ENCODE measurements at regions of chr16 and their contacts with region 1.

Region 1: GRCh38 chr16:56964243-56965148 is 2.7 kb downstream of the CETP start:
- DNase-seq: peak; percentile 98
- H3K4me3 ChIP-seq: no peak overlapping the region
- H3K27ac ChIP-seq: no peak overlapping the region
- H3K4me1 ChIP-seq: no peaks in the 10 kb centered on the region
- H3K27me3 ChIP-seq: no peaks in the 10 kb centered on the region
- CTCF ChIP-seq: peak; percentile 95

Region 2: DNA sequence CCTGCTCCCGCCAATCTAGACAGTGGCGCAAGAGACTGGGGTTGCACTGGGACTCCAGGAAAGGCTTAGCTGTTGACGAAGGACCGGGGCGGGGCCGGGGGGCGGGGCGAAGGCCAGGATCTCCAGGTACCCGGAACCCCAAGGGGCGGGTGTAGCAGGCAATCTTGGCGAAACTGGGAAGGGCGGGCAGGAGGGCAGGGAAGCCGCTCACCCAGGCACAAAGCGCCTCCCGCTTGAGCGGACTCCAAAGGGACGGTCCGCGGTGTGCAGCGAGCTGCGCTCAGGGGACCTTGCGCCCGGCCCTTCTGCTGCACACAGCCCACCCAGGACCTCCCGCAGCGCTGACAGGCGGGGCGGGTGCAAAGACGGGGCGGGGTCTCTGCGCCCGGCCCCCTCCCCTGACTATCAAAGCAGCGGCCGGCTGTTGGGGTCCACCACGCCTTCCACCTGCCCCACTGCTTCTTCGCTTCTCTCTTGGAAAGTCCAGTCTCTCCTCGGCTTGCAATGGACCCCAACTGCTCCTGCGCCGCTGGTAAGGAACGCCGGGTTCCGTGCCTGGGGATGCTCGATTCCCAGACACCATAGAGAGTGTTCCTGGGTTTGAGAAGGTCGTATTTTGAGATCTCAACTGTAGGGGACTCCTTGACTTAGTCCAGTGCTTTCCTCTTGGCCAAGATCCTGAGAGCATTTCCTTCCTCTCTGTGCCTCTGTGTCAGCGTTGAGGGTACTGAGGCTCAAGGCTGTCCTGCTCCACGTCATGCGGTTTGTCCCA is 306.8 kb before region 1 on chr16 and contains the start of gene MT1F:
- intact Hi-C with region 1: no loop called
- DNase-seq: peak; percentile 99
- H3K4me3 ChIP-seq: peak within 1 kb of the TSS; percentile 55
- H3K27ac ChIP-seq: peak within 1 kb of the TSS; percentile 60
- H3K4me1 ChIP-seq: no peaks in the 10 kb centered on the region
- H3K27me3 ChIP-seq: peaks cover under 1% of the 10 kb centered on the region
- CTCF ChIP-seq: no peak
- total RNA-seq, gene MT1F: 35.5 to 40.0 TPM

Region 3: DNA sequence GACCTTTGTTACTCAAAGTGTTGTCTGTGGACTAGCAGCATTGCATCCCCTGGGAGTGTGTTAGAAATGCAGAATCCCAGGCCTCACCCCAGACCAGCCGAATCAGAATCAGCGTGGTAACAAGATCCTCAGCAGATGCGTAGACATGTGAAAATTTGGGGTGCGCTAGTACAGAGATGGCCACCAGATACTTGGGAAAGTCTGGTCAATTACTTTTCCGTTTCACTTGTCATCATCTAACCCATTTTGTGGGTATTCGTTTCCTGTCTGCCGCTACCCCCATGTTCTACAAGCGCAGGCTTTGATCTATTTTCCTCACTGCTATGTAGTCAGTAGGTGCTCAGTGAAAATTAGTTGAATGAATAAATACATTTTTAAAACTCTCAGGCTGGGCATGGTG is 65.6 kb before region 1 on chr16:
- intact Hi-C with region 1: no loop called
- DNase-seq: no peak
- H3K4me3 ChIP-seq: no peak overlapping the region
- H3K27ac ChIP-seq: no peak overlapping the region
- H3K4me1 ChIP-seq: no peaks in the 10 kb centered on the region
- H3K27me3 ChIP-seq: no peaks in the 10 kb centered on the region
- CTCF ChIP-seq: no peak

Region 4: DNA sequence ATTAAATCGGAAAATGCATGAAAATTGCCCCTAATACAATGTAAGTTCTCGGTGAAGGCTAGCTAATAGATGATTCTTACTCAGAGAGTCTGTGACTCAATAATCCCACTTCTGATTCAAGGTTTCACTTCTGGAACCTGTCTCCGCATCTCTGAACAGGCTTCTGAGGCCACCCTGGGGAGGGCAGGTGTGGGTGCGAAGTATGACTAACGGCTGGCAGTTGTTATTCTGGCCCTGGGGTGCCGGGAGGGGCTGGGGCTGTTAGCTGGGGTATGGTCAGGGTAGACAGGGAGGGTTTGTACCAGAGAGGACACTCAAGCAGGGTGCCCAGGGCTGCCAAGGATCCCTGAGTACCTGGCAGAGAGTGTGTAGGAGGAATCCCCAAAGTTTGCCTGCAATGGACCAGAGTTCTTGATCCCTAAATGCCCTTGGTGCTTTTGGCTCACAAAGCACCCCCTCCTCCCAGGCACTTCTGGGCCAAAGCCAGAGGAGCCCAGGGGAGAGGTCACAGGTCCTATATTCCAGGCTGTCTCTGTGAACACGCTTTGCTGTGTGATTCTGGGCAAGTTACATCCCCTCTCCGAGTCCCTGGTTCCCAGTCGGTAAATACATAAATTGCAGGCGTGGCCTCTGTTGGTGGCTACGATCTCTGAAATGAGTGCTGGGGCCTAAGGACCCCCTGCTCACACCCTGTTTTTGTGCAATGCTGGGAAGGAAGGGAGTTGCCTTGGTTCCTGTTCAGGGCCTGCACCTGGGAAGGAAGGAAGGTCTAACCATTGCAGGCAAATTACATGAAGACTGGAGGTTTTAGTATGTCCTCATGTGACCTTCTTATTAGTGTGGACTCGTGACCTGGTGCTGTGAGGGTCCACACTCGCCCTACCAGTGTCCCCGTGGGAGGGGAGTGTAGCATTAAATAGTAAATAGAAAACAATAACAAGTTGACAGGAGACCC is 77.9 kb after region 1 on chr16:
- intact Hi-C with region 1: loop called (anchors 5 kb)
- DNase-seq: no peak
- H3K4me3 ChIP-seq: no peak overlapping the region
- H3K27ac ChIP-seq: peak overlapping the region; percentile 31
- H3K4me1 ChIP-seq: no peaks in the 10 kb centered on the region
- H3K27me3 ChIP-seq: no peaks in the 10 kb centered on the region
- CTCF ChIP-seq: no peak

Region 5: DNA sequence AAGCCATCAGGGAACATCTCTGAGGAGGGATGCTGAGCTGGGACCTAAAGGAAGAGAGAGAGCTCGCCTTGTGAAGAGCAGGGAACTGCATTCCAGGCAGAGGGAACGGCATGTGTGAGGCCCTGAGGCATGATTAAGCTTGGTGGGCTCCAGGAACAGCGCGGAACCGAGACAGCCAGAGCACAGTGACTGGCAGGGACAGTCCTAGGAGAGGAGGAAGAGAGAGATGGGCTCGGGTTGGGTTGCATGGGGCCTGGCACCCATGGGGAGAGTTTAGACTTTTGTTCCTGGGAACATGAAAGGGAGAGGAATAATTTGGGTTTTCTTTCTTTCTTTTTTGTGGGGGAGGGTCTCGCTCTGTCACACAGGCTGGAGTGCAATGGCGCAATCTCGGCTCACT is 88.7 kb after region 1 on chr16:
- intact Hi-C with region 1: no loop called
- DNase-seq: no peak
- H3K4me3 ChIP-seq: no peak overlapping the region
- H3K27ac ChIP-seq: no peak overlapping the region
- H3K4me1 ChIP-seq: no peaks in the 10 kb centered on the region
- H3K27me3 ChIP-seq: no peaks in the 10 kb centered on the region
- CTCF ChIP-seq: no peak

Region 6: GRCh38 chr16:57084257-57084770 is 119.8 kb after region 1 on chr16:
- intact Hi-C with region 1: loop called (anchors 10 kb)
- DNase-seq: peak; percentile 74
- H3K4me3 ChIP-seq: no peak overlapping the region
- H3K27ac ChIP-seq: no peak overlapping the region
- H3K4me1 ChIP-seq: no peaks in the 10 kb centered on the region
- H3K27me3 ChIP-seq: no peaks in the 10 kb centered on the region
- CTCF ChIP-seq: peak; percentile 96

Region 7: DNA sequence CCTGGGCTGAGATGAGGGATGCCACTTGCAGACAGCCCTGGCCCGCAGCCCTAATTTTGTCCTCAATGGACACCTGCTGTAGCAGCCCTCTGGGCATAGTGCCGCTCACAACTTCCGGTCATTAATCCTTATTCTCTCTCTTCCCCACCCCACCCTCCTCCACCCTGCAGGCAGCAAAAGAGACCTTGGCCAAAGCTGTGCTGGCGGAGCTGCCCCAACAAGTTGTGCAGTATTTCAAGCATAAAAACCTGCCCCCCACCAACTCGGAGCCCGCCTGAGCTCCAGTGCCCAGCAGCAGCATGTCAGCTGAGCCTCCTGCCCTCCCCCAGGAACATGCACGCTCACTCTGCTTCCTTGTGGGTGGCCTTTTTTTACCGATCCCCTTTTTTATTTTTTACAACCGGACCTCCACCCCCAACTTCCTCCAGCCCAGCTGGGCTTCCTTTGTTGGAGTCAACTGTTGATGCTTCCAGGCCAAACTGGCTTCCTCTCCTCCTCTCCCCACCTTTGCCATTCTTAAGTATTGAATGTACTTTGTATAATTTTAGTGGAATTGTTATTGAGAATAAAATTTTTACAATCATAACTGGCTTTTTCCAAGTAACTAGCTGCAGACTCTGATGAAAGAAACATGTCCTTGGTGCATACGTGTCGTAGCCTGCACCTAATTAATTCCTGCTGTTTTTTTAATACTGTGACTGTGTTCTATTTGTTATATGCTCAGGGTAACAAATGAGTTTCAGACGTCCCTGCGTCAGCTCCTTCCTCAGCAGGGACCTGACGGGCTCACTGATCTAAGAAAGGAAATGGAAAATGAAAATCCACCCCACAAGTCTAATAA is 183.1 kb after region 1 on chr16:
- intact Hi-C with region 1: no loop called
- DNase-seq: no peak
- H3K4me3 ChIP-seq: no peak overlapping the region
- H3K27ac ChIP-seq: no peak overlapping the region
- H3K4me1 ChIP-seq: peaks cover 10% of the 10 kb centered on the region
- H3K27me3 ChIP-seq: no peaks in the 10 kb centered on the region
- CTCF ChIP-seq: no peak